RWPE1 (cell line): ENCODE measurements at regions of chr2 and their contacts with region 1.

Region 1: GRCh38 chr2:80238692-80239469 is 65.7 kb downstream of the LRRTM1 start:
- DNase-seq: peak; percentile 33
- H3K27ac ChIP-seq: no peak overlapping the region
- CTCF ChIP-seq: peak; percentile 62

Region 2: GRCh38 chr2:80073134-80073561 is 165.7 kb before region 1 on chr2:
- CTCF ChIA-PET with region 1: interaction called, 10 read pairs
- POLR2A ChIA-PET with region 1: no interaction called
- DNase-seq: peak; percentile 56
- H3K27ac ChIP-seq: no peak overlapping the region
- CTCF ChIP-seq: peak; percentile 67

Region 3: DNA sequence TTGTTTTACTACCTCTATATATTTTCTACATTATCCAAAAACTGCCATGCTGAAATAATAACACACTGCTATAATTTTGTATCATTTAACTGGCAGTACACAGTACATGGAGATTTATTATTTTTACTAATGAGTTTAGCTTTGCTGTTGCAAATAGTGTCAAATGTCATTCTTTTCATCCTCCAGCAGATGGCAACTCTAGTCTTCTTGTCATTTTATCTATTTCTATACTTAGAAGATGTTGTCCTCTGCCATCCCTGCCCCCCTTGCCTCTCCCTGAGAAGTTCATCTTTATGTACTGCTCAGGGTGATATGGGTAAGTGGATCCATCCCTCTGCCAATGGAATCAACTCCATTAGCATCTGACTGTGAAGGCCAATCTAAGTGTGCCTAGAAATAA is 87.3 kb after region 1 on chr2:
- CTCF ChIA-PET with region 1: no interaction called
- POLR2A ChIA-PET with region 1: no interaction called
- DNase-seq: peak; percentile 12
- H3K27ac ChIP-seq: no peak overlapping the region
- CTCF ChIP-seq: peak; percentile 29; the same call in 1 of the 2 replicates